CD8-positive, alpha-beta T cell (primary cell): ENCODE measurements at regions of chr12 and their contacts with region 1.

Region 1: GRCh38 chr12:6927379-6928024 is at the start of gene ATN1:
- DNase-seq: peak in 6 of 9 experiments; percentile 36 to 69 (median 58)
- ATAC-seq: peak; percentile 44
- H3K4me3 ChIP-seq: peak within 1 kb of the TSS; percentile 52 to 64
- H3K4me3 Mint-ChIP-seq: peak within 1 kb of the TSS; percentile 85
- H3K27ac ChIP-seq: peak within 1 kb of the TSS; percentile 51 to 71
- H3K27ac Mint-ChIP-seq: peak within 1 kb of the TSS; percentile 91
- H3K4me1 ChIP-seq: peaks cover 31% of the 10 kb centered on the region
- H3K4me1 Mint-ChIP-seq: peaks cover 44% of the 10 kb centered on the region
- H3K27me3 ChIP-seq: no peaks in the 10 kb centered on the region
- H3K27me3 Mint-ChIP-seq: no peaks in the 10 kb centered on the region
- CTCF ChIP-seq: no peak
- total RNA-seq, gene ATN1: 26.5 to 33.4 TPM

Region 2: DNA sequence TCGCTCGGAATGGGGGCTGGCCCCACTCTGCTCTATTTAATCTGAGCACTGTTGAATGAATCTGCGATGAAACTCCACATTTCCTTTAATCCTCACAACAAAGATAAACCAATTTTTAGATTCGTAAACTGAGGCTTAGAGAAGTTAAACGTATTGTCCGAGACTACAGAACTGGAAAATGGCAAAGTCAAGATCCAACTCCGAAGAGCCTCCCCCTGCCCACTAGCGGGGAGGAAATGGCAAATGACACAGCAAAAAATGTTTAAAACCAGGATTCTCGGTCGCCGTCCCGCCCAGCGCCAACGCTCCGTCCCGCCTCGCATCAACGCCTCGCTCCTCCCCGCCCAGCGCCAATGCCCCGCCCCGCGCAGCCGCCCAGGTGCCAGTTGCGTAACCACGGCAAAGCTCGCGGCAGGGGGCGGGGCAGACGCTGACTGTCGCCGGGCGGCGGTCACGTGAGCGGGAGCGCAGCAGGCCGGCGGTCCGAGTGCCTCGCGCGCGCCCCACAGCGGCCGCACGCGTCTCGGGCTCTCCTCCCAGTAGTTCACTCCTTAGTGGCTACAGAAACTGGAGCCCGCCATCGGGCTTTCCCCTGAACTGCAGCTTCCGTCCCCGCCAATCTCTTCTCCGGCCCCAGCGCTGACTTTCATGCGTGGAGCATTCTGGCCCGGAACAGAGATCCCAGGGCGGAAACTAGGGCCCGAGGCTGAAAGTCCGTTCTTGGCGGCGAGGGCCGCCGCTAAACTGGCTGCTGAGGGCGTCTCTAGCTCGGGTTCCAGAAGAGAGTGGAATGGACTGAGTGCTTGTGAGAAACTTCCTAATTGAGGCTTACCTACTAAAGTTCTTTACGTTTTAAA is 36.5 kb before region 1 on chr12:
- CTCF ChIA-PET with region 1: interaction called, 14 read pairs
- POLR2A ChIA-PET with region 1: no interaction called
- intact Hi-C with region 1: loop called in 1 of 2 experiments (anchors 1 kb)
- DNase-seq: peak; percentile 97 to 100 (median 99)
- ATAC-seq: peak; percentile 94
- H3K4me3 ChIP-seq: peak overlapping the region; percentile 64 to 70
- H3K4me3 Mint-ChIP-seq: peak overlapping the region; percentile 80
- H3K27ac ChIP-seq: peak overlapping the region; percentile 64 to 97
- H3K27ac Mint-ChIP-seq: peak overlapping the region; percentile 90
- H3K4me1 ChIP-seq: peaks cover 11% of the 10 kb centered on the region
- H3K4me1 Mint-ChIP-seq: peaks cover 16% of the 10 kb centered on the region
- H3K27me3 ChIP-seq: no peaks in the 10 kb centered on the region
- H3K27me3 Mint-ChIP-seq: no peaks in the 10 kb centered on the region
- CTCF ChIP-seq: peak; percentile 86

Region 3: DNA sequence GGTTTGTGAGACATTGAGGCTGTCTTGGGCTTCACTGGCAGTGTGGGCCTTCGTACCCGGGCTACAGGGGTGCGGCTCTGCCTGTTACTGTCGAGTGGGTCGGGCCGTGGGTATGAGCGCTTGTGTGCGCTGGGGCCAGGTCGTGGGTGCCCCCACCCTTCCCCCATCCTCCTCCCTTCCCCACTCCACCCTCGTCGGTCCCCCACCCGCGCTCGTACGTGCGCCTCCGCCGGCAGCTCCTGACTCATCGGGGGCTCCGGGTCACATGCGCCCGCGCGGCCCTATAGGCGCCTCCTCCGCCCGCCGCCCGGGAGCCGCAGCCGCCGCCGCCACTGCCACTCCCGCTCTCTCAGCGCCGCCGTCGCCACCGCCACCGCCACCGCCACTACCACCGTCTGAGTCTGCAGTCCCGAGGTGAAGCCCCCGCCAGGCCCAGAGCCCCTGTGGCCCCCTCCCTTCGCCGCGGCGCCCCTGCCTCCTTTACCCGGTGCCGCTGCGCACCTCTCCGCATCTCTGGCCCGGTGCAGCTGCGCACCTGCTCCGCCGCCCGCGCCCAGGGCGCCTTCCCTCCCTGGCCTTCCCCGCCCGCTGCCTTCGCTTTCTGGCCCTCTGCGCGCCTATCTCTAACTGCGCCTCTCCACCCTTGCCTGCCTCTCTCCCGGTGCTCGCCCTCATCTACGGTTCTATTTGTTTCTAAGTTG is 13.1 kb before region 1 on chr12 and contains the start of gene ENO2:
- CTCF ChIA-PET with region 1: interaction called, 83 read pairs
- POLR2A ChIA-PET with region 1: interaction called, 13 read pairs
- intact Hi-C with region 1: loop called in 1 of 2 experiments (anchors 1 kb)
- DNase-seq: peak; percentile 59 to 92 (median 89)
- ATAC-seq: peak; percentile 94
- H3K4me3 ChIP-seq: peak within 1 kb of the TSS; percentile 52 to 83
- H3K4me3 Mint-ChIP-seq: peak within 1 kb of the TSS; percentile 95
- H3K27ac ChIP-seq: peak within 1 kb of the TSS; percentile 77 to 88
- H3K27ac Mint-ChIP-seq: peak within 1 kb of the TSS; percentile 95
- H3K4me1 ChIP-seq: peaks cover 18% of the 10 kb centered on the region
- H3K4me1 Mint-ChIP-seq: peaks cover 31% of the 10 kb centered on the region
- H3K27me3 ChIP-seq: no peaks in the 10 kb centered on the region
- H3K27me3 Mint-ChIP-seq: no peaks in the 10 kb centered on the region
- CTCF ChIP-seq: no peak
- total RNA-seq, gene ENO2: 95.5 to 99.6 TPM

Region 4: GRCh38 chr12:6944381-6945186 is 17.1 kb after region 1 on chr12:
- CTCF ChIA-PET with region 1: interaction called, 180 read pairs
- POLR2A ChIA-PET with region 1: interaction called, 29 read pairs
- intact Hi-C with region 1: loop called in 1 of 2 experiments (anchors 1 kb)
- DNase-seq: peak; percentile 67 to 94 (median 89)
- ATAC-seq: peak; percentile 51
- H3K4me3 ChIP-seq: peak overlapping the region; percentile 90 to 97
- H3K4me3 Mint-ChIP-seq: peak overlapping the region; percentile 99
- H3K27ac ChIP-seq: peak overlapping the region; percentile 94 to 97
- H3K27ac Mint-ChIP-seq: peak overlapping the region; percentile 100
- H3K4me1 ChIP-seq: peaks cover 56% of the 10 kb centered on the region
- H3K4me1 Mint-ChIP-seq: peaks cover 63% of the 10 kb centered on the region
- H3K27me3 ChIP-seq: no peaks in the 10 kb centered on the region
- H3K27me3 Mint-ChIP-seq: no peaks in the 10 kb centered on the region
- CTCF ChIP-seq: peak; percentile 87

Region 5: GRCh38 chr12:7042842-7043241 is 115.3 kb after region 1 on chr12:
- CTCF ChIA-PET with region 1: interaction called, 3 read pairs
- POLR2A ChIA-PET with region 1: no interaction called
- intact Hi-C with region 1: loop called in 1 of 2 experiments (anchors 2 kb)
- DNase-seq: peak in 2 of 9 experiments; percentile 22 to 44
- ATAC-seq: no peak
- H3K4me3 ChIP-seq: no peak overlapping the region
- H3K4me3 Mint-ChIP-seq: no peak overlapping the region
- H3K27ac ChIP-seq: no peak overlapping the region
- H3K27ac Mint-ChIP-seq: no peak overlapping the region
- H3K4me1 ChIP-seq: no peaks in the 10 kb centered on the region
- H3K4me1 Mint-ChIP-seq: peaks cover 8% of the 10 kb centered on the region
- H3K27me3 ChIP-seq: no peaks in the 10 kb centered on the region
- H3K27me3 Mint-ChIP-seq: no peaks in the 10 kb centered on the region
- CTCF ChIP-seq: peak; percentile 17

Region 6: DNA sequence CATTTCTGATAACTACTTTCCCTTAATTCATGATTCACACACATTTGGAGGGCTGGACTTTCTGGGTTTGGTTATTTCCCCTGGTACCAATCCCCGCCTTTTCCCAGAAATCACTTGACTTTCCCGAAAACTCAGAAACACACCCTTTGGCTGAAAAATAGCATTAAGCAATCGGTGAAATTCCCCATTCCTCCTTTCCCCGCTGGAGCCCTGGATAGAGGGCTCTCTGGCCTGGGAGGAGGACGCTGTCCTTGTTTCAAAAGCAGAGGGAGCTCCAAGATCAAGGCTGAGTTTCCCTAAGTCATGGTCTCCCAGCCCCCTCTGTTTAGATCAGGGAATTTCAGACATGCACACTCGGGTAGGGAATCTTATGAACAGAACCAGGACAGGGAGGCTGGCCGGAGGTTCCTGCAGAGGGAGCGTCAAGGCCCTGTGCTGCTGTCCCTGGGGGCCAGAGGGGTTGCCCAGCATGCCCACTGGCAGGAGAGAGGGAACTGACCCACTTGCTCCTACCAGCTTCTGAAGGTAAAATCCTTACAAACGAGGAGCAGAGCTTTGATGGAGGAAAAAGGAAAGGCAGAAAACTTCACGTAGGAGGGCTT is 133.0 kb after region 1 on chr12 and contains the start of gene C1S:
- CTCF ChIA-PET with region 1: no interaction called
- POLR2A ChIA-PET with region 1: no interaction called
- intact Hi-C with region 1: no loop called
- DNase-seq: no peak
- ATAC-seq: no peak
- H3K4me3 ChIP-seq: no peak within 1 kb of the TSS
- H3K4me3 Mint-ChIP-seq: no peak within 1 kb of the TSS
- H3K27ac ChIP-seq: no peak within 1 kb of the TSS
- H3K27ac Mint-ChIP-seq: no peak within 1 kb of the TSS
- H3K4me1 ChIP-seq: no peaks in the 10 kb centered on the region
- H3K4me1 Mint-ChIP-seq: no peaks in the 10 kb centered on the region
- H3K27me3 ChIP-seq: peaks cover 3% of the 10 kb centered on the region in 2 experiments
- H3K27me3 Mint-ChIP-seq: peaks cover 37% of the 10 kb centered on the region
- CTCF ChIP-seq: no peak
- total RNA-seq, gene C1S: 1.5 to 2.4 TPM

Region 7: DNA sequence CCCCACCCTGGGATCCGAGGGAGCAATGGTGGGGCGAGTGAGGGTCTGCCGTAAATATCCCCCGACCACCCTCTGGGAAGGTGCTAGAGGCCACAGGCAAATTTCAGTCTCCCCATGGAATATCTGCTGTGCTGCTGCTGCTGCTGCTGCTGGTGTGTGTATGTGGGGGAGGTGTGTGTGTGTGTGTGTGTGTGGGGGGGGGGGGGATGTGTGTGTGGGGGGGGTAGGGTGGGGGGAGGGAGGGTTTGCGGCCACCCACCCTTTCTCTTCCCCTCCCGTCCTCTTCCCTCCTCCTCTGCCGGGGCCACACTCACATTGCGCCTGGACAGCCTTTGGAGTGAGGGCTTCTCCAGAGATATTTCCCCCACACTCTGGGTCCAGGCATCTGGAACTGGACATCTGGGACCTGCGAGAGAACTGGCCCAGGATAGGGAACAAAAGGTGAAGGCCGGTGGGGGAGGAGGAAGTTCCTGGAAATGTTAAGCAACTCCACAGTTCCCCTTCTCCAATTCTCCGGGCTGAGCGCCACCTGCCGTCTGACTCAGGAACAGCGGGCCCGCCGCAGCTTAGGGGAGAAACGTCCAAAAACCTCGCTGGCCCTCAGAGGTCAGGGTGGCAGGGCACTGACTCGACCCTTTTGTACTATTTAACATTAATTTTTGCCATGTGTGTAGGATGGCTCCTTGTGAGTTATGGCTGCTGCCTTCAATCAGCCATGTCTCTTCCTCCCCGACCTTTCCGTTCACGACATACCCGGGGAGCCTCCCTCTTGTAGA is 181.5 kb after region 1 on chr12 and contains the start of gene C1RL:
- CTCF ChIA-PET with region 1: interaction called, 38 read pairs
- POLR2A ChIA-PET with region 1: interaction called, 3 read pairs
- intact Hi-C with region 1: loop called (anchors 1 kb)
- DNase-seq: peak; percentile 58 to 85 (median 77)
- ATAC-seq: peak; percentile 46
- H3K4me3 ChIP-seq: peak within 1 kb of the TSS; percentile 88 to 97
- H3K4me3 Mint-ChIP-seq: peak within 1 kb of the TSS; percentile 94
- H3K27ac ChIP-seq: peak within 1 kb of the TSS; percentile 67 to 80
- H3K27ac Mint-ChIP-seq: peak within 1 kb of the TSS; percentile 93
- H3K4me1 ChIP-seq: peaks cover 16% of the 10 kb centered on the region
- H3K4me1 Mint-ChIP-seq: peaks cover 44% of the 10 kb centered on the region
- H3K27me3 ChIP-seq: no peaks in the 10 kb centered on the region
- H3K27me3 Mint-ChIP-seq: no peaks in the 10 kb centered on the region
- CTCF ChIP-seq: peak; percentile 90
- total RNA-seq, gene C1RL: 8.0 to 9.0 TPM